ENCODE measurements at regions of chr22 and their contacts with region 1.

Region 1: GRCh38 chr22:22959147-22959827 is 71.7 kb downstream of the IGLL5 start:
- DNase-seq: peak; percentile 75
- H3K4me3 Mint-ChIP-seq: no peak overlapping the region
- H3K27ac Mint-ChIP-seq: no peak overlapping the region
- H3K4me1 Mint-ChIP-seq: no peaks in the 10 kb centered on the region
- H3K27me3 Mint-ChIP-seq: peaks cover 39% of the 10 kb centered on the region

Region 2: GRCh38 chr22:22753526-22754267 is 205.6 kb before region 1 on chr22:
- CTCF ChIA-PET with region 1: interaction called, 11 read pairs
- POLR2A ChIA-PET with region 1: no interaction called
- DNase-seq: peak; percentile 83
- H3K4me3 Mint-ChIP-seq: no peak overlapping the region
- H3K27ac Mint-ChIP-seq: no peak overlapping the region
- H3K4me1 Mint-ChIP-seq: peaks cover 6% of the 10 kb centered on the region
- H3K27me3 Mint-ChIP-seq: no peaks in the 10 kb centered on the region

Region 3: DNA sequence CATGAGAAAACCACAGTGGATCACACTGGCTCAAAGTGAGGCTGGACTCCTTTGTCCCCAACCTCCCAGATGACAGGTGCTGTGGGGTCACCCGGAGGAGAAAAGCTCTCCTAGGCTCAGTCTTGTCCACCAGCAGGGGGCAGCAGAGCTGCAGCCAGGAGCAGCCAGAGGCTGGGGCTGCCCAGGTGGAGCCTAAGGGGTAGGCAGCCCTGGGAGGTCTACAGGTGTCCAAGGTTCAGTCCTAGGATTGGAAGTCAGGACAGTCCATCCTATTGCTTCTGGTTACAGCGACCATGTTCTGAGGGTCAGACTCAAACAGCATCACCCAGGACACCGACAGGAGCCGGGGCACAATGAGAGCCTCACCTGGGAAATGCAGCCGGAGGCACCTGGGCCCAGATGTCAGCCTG is 149.3 kb before region 1 on chr22:
- CTCF ChIA-PET with region 1: interaction called, 45 read pairs
- POLR2A ChIA-PET with region 1: no interaction called
- DNase-seq: peak; percentile 82
- H3K4me3 Mint-ChIP-seq: no peak overlapping the region
- H3K27ac Mint-ChIP-seq: no peak overlapping the region
- H3K4me1 Mint-ChIP-seq: peaks cover 8% of the 10 kb centered on the region
- H3K27me3 Mint-ChIP-seq: peaks cover 29% of the 10 kb centered on the region

Region 4: GRCh38 chr22:22855617-22856308 is 103.5 kb before region 1 on chr22:
- CTCF ChIA-PET with region 1: interaction called, 54 read pairs
- POLR2A ChIA-PET with region 1: no interaction called
- DNase-seq: peak; percentile 51
- H3K4me3 Mint-ChIP-seq: no peak overlapping the region
- H3K27ac Mint-ChIP-seq: no peak overlapping the region
- H3K4me1 Mint-ChIP-seq: no peaks in the 10 kb centered on the region
- H3K27me3 Mint-ChIP-seq: peaks cover 31% of the 10 kb centered on the region

Region 5: DNA sequence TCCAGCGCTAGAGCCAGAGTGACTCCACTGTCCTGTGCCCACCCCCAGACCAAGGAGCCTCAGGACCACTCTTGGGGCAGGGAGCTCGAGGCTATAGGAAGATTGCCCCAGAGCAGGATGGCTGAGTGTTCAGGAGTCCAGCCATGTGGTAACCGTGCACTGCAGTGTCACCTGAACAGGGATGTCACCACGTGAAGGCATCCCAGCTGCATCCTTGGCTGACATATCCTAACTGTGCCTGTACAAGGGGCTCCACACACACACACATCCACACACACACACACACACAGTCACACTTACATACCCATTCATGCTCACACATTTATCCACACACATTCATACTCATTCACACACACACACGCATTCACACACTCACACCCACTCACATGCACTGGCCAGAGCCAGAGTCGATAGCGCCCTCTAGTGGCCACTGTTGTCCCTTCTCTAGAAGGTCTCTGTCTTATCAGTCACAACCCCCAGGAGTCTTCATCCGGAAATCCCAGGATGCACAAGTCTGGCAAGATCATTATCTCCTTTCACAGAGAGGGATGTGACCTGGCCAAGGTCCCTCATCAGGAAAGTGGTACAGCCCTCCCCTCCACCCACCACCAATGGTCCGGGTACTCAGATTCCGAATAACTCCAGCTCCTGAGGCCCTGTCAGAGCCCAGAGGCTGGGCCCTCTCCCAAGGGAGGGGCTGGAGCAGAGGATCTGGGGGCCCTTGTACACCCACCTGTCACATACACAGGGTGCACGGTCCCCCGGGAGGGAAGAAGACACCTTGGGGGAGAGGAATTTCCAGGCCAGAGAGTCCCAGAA is 16.6 kb before region 1 on chr22:
- CTCF ChIA-PET with region 1: interaction called, 26 read pairs
- POLR2A ChIA-PET with region 1: no interaction called
- DNase-seq: peak; percentile 84
- H3K4me3 Mint-ChIP-seq: no peak overlapping the region
- H3K27ac Mint-ChIP-seq: no peak overlapping the region
- H3K4me1 Mint-ChIP-seq: peaks cover 19% of the 10 kb centered on the region
- H3K27me3 Mint-ChIP-seq: peaks cover 15% of the 10 kb centered on the region

Region 6: GRCh38 chr22:23128269-23129108 is 169.2 kb after region 1 on chr22:
- CTCF ChIA-PET with region 1: interaction called, 72 read pairs
- POLR2A ChIA-PET with region 1: no interaction called
- DNase-seq: peak; percentile 72
- H3K4me3 Mint-ChIP-seq: no peak overlapping the region
- H3K27ac Mint-ChIP-seq: no peak overlapping the region
- H3K4me1 Mint-ChIP-seq: no peaks in the 10 kb centered on the region
- H3K27me3 Mint-ChIP-seq: peaks cover 2% of the 10 kb centered on the region

Measured in activated CD4-positive, alpha-beta memory T cell treated with anti-CD3 and anti-CD28 coated beads, Interleukin-2, amount 10 ng/mL, durations not matched to agents 7 days and 5 days (primary cell).